GM12878 (cell line): ENCODE measurements at regions of chr17 and their contacts with region 1.

Region 1: DNA sequence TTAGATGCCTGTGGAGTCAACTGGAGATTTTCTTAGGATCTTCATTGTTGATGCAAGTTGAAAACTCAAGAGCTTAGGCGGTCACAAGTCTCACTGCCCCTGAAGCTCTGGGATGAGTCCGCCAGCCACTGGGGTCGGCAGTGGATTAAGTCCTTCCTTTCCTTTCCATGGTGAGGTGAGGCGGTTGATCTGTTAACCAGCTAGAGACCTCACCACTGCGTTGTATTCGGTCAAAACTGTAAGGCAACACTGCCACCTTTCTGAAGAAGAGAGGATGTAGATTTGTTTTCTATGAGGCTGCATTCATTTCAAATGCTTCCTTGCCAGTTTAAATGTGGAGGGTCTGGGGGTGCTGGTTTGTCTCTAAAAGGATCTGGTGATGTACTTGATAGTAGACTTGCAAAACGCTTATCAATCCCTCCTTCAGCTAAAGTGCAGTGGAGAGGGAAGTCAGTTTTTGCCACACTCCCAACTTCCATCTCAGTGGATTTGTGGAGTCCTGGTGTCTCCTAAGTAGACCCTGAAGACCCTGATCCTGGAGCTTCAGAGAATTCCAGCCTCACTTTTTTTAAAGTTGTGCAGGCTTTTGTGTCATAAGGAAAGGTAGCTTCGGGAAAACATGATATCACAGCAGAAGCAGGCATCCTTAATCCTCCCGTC is 1.7 kb downstream of the MYOCD start:
- DNase-seq: no peak
- ATAC-seq: peak; percentile 67
- H3K4me3 ChIP-seq: no peak overlapping the region
- H3K27ac ChIP-seq: no peak overlapping the region
- H3K4me1 ChIP-seq: no peaks in the 10 kb centered on the region
- H3K27me3 ChIP-seq: peaks cover 5% of the 10 kb centered on the region in 2 experiments; a peak in 3 of 4 replicates
- CTCF ChIP-seq: peak; percentile 32 to 63 (median 42); a peak in 5 of 6 replicates
- EP300 ChIP-seq: no peak
- POLR2A ChIP-seq: no peak
- RAD21 ChIP-seq: peak; percentile 73

Region 2: GRCh38 chr17:12250973-12251372 is 416.5 kb before region 1 on chr17:
- CTCF ChIA-PET with region 1: interaction called, 16 read pairs
- POLR2A ChIA-PET with region 1: no interaction called
- RAD21 ChIA-PET with region 1: interaction called, 6 read pairs
- SMC1A ChIA-PET with region 1: interaction called, 13 read pairs
- in situ Hi-C with region 1: loop called (anchors 5 kb)
- intact Hi-C with region 1: loop called (anchors 1 kb)
- DNase-seq: no peak
- ATAC-seq: peak; percentile 26; the same call in 2 of the 3 replicates
- H3K4me3 ChIP-seq: no peak overlapping the region
- H3K27ac ChIP-seq: no peak overlapping the region
- H3K4me1 ChIP-seq: no peaks in the 10 kb centered on the region; the same call in 1 of the 2 replicates
- H3K27me3 ChIP-seq: no peaks in the 10 kb centered on the region
- CTCF ChIP-seq: no peak
- EP300 ChIP-seq: no peak
- POLR2A ChIP-seq: no peak
- RAD21 ChIP-seq: no peak

Region 3: GRCh38 chr17:12342609-12343435 is 324.6 kb before region 1 on chr17:
- CTCF ChIA-PET with region 1: interaction called, 25 read pairs
- POLR2A ChIA-PET with region 1: interaction called, 4 read pairs
- RAD21 ChIA-PET with region 1: interaction called, 14 read pairs
- SMC1A ChIA-PET with region 1: interaction called, 11 read pairs
- in situ Hi-C with region 1: loop called (anchors 10 kb)
- intact Hi-C with region 1: loop called (anchors 2 kb)
- DNase-seq: no peak
- ATAC-seq: peak; percentile 75
- H3K4me3 ChIP-seq: no peak overlapping the region
- H3K27ac ChIP-seq: no peak overlapping the region
- H3K4me1 ChIP-seq: no peaks in the 10 kb centered on the region
- H3K27me3 ChIP-seq: no peaks in the 10 kb centered on the region
- CTCF ChIP-seq: peak; percentile 44 to 58 (median 46)
- EP300 ChIP-seq: no peak
- POLR2A ChIP-seq: no peak
- RAD21 ChIP-seq: peak; percentile 69

Region 4: DNA sequence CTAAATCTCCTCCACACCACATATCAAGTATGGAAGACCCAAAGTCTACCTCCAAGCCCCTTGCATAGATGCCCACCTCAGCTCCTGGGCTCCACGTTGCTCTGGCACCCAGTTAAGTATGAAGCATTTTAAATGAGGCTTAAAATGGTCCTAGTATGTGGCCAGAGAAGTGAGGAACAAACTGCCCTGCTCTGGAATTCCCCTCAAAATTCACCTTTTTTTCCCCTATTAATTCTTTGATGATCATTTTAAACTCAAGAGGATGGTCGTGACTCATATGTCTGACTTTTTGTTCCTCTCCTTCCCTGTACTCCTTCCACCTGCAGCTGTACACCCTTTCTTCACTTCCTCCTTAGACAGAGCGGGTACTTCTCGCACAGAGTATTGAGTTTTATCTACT is 236.2 kb before region 1 on chr17:
- CTCF ChIA-PET with region 1: no interaction called
- POLR2A ChIA-PET with region 1: no interaction called
- RAD21 ChIA-PET with region 1: no interaction called
- SMC1A ChIA-PET with region 1: no interaction called
- in situ Hi-C with region 1: no loop called
- intact Hi-C with region 1: loop called (anchors 10 kb)
- DNase-seq: peak; percentile 85
- ATAC-seq: peak; percentile 89
- H3K4me3 ChIP-seq: 0 out of 2 replicates have a peak overlapping the region, but pooled peaks have one; percentile 6
- H3K27ac ChIP-seq: peak overlapping the region; percentile 98
- H3K4me1 ChIP-seq: peaks cover 44% of the 10 kb centered on the region
- H3K27me3 ChIP-seq: no peaks in the 10 kb centered on the region
- CTCF ChIP-seq: no peak
- EP300 ChIP-seq: peak; percentile 54 to 96; a peak in 3 of 4 replicates
- POLR2A ChIP-seq: peak; percentile 52
- RAD21 ChIP-seq: no peak

Region 5: GRCh38 chr17:12727096-12727760 is 59.8 kb after region 1 on chr17:
- CTCF ChIA-PET with region 1: no interaction called
- POLR2A ChIA-PET with region 1: no interaction called
- RAD21 ChIA-PET with region 1: no interaction called
- SMC1A ChIA-PET with region 1: no interaction called
- in situ Hi-C with region 1: loop called (anchors 10 kb)
- intact Hi-C with region 1: no loop called
- DNase-seq: no peak
- ATAC-seq: no peak
- H3K4me3 ChIP-seq: no peak overlapping the region
- H3K27ac ChIP-seq: no peak overlapping the region
- H3K4me1 ChIP-seq: no peaks in the 10 kb centered on the region
- H3K27me3 ChIP-seq: no peaks in the 10 kb centered on the region
- CTCF ChIP-seq: no peak
- EP300 ChIP-seq: no peak
- POLR2A ChIP-seq: no peak
- RAD21 ChIP-seq: no peak